Panc1 (cell line): ENCODE measurements at regions of chr20 and their contacts with region 1.

Region 1: GRCh38 chr20:64001607-64002011 is 20.7 kb downstream of the PRPF6 start:
- DNase-seq: no peak
- ATAC-seq: peak; percentile 49
- H3K4me3 ChIP-seq: no peak overlapping the region
- H3K27ac ChIP-seq: no peak overlapping the region
- H3K4me1 ChIP-seq: no peaks in the 10 kb centered on the region
- H3K27me3 ChIP-seq: no peaks in the 10 kb centered on the region
- CTCF ChIP-seq: no peak

Region 2: GRCh38 chr20:63884506-63885263 is 116.9 kb before region 1 on chr20:
- CTCF ChIA-PET with region 1: no interaction called
- POLR2A ChIA-PET with region 1: interaction called, 11 read pairs
- in situ Hi-C with region 1: no loop called
- intact Hi-C with region 1: no loop called
- DNase-seq: no peak
- ATAC-seq: no peak
- H3K4me3 ChIP-seq: no peak overlapping the region
- H3K27ac ChIP-seq: no peak overlapping the region
- H3K4me1 ChIP-seq: no peaks in the 10 kb centered on the region
- H3K27me3 ChIP-seq: no peaks in the 10 kb centered on the region
- CTCF ChIP-seq: no peak

Region 3: GRCh38 chr20:64024141-64024990 is 22.8 kb after region 1 on chr20:
- CTCF ChIA-PET with region 1: no interaction called
- POLR2A ChIA-PET with region 1: no interaction called
- in situ Hi-C with region 1: no loop called
- intact Hi-C with region 1: no loop called
- DNase-seq: no peak
- ATAC-seq: no peak
- H3K4me3 ChIP-seq: no peak overlapping the region
- H3K27ac ChIP-seq: no peak overlapping the region; the same call in 1 of the 2 replicates
- H3K4me1 ChIP-seq: no peaks in the 10 kb centered on the region
- H3K27me3 ChIP-seq: no peaks in the 10 kb centered on the region
- CTCF ChIP-seq: no peak